ENCODE measurements at regions of chr11 and their contacts with region 1.

Region 1: DNA sequence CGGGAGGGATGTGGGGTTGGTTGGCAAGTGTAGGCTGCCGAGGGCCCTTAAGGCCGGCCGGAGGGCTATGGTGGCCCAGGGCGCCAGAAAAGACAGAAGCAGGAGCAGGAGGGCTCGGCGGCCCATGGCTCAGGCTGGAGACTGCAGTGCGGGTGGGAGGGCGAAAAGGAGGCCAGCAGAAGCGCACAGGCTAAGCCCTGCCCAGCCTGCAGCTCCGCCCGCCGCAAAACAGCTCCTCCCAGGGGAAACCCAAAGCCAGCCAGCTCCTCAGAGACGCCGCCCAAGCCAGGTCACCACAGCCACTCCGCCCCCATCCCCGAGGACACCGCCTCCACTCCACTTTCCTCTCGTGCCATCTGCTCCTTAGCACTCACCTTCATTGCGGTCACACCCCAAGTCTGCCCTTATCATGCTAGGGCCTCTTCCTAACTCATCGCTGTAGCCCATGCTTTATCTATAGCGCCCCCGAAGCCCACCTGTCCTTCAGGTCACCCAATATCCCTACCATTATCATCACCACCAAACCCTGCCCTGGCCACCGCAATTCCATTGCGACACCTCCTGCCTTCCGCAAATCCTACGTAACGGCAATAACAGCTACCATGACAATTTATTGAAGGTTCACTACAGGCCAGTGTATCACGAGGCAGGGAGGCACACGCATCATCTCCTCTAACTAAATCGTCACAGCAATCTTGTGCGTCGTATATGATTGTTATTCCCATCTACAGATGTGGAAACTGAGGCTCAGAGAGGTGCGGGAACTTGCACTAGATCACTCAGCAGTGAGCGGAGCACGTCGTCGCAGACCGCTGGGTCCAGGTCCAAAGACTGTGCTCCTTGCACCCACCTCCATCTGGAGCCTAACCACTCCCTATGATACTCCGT is at the start of gene PRCP:
- DNase-seq: peak; percentile 92 to 95
- H3K4me3 ChIP-seq: peak within 1 kb of the TSS; percentile 88
- H3K27ac ChIP-seq: peak within 1 kb of the TSS; percentile 31; the same call in 1 of the 2 replicates
- H3K4me1 ChIP-seq: peaks cover 17% of the 10 kb centered on the region
- H3K27me3 ChIP-seq: no peaks in the 10 kb centered on the region
- CTCF ChIP-seq: no peak
- total RNA-seq, gene PRCP: 42.7 and 46.2 TPM in 2 replicates

Region 2: DNA sequence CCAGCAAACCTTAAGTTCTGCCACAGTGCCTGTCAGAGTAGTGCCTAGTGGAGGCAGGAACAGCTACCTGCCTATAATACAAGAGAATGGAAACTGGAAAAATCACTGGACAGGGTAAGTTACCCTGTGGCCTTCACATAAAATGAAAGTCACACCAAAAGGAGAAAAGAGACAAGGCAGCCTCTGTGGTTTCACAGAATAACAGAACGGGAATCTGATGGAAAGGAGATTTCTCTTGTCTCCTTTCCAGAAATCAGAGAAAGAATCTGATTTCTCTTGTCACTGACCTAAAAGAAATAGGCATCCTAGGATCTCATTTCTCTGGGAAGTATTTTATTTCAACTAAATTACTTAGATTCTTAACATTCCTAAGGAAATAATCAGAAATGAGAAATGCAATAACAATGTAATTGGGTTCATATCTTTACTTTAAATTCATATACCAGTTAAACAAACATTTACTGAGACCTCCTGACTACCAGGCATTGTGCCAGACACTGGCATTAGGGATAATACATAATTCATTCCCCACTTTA is 41.9 kb before region 1 on chr11:
- CTCF ChIA-PET with region 1: no interaction called
- POLR2A ChIA-PET with region 1: interaction called, 5 read pairs
- intact Hi-C with region 1: loop called (anchors 2 kb)
- DNase-seq: peak; percentile 41 to 91
- H3K4me3 ChIP-seq: peak overlapping the region; percentile 3; the same call in 1 of the 2 replicates
- H3K27ac ChIP-seq: peak overlapping the region; percentile 76
- H3K4me1 ChIP-seq: peaks cover 35% of the 10 kb centered on the region
- H3K27me3 ChIP-seq: no peaks in the 10 kb centered on the region
- CTCF ChIP-seq: no peak

Region 3: DNA sequence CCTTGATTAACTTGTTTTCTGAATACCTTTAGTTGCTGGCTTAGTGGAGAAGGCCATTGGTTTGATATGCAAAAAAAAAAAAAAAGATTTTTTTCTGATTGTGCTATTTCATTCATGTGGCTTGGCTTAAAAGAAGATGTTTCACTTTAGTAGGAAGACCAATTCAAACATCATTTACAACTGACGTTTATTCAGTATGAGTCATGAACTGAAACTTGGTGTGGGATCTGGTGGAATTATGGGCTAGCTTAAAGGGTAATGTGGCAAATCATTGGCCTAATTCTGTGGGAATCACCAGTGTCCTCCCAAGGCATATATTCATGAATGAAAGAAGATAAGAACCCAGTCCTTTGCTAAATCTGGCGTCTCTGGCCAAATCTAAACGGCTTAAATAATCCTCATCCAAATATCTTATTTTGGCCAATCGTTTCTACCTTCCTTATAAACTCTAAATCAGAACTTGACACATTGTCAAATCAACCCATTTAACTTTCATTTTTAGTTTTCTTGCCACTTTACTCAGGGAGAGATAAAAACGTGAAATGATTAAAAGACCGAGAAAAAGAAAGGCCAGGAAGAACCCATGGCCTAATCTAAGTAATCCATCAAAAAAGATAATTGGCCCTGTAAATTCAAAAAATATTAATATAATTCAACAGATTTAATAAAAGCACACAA is 78.0 kb after region 1 on chr11:
- CTCF ChIA-PET with region 1: no interaction called
- POLR2A ChIA-PET with region 1: no interaction called
- intact Hi-C with region 1: no loop called
- DNase-seq: peak in 1 of 2 experiments; percentile 56
- H3K4me3 ChIP-seq: no peak overlapping the region
- H3K27ac ChIP-seq: no peak overlapping the region
- H3K4me1 ChIP-seq: no peaks in the 10 kb centered on the region
- H3K27me3 ChIP-seq: no peaks in the 10 kb centered on the region
- CTCF ChIP-seq: no peak

Region 4: GRCh38 chr11:83193315-83194280 is 293.1 kb after region 1 on chr11 and contains the start of gene ANKRD42:
- CTCF ChIA-PET with region 1: no interaction called
- POLR2A ChIA-PET with region 1: no interaction called
- intact Hi-C with region 1: loop called (anchors 2 kb)
- DNase-seq: peak; percentile 87 to 96
- H3K4me3 ChIP-seq: peak within 1 kb of the TSS; percentile 72
- H3K27ac ChIP-seq: peak within 1 kb of the TSS; percentile 42
- H3K4me1 ChIP-seq: peaks cover 32% of the 10 kb centered on the region
- H3K27me3 ChIP-seq: no peaks in the 10 kb centered on the region
- CTCF ChIP-seq: no peak
- total RNA-seq, gene ANKRD42: 6.8 and 10.4 TPM in 2 replicates

Region 5: DNA sequence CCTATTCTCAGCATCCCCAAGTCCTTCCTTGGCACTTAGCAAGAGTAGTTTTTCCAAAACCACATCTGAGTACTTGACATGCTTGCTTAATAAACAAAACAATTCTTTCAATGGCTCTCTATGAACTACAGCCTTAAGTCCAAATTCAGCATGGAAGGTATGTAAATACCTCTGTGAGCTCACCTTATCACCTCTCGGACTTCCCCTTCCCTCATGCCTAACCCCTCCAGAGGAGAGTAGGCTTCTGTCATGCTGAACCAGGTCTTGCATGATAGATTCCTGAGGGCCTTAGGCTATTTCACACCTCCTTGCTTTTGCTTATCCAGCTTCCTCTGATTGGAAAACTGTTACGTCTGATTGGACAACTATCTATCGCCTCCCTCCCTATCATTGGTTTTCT is 698.5 kb after region 1 on chr11:
- CTCF ChIA-PET with region 1: no interaction called
- POLR2A ChIA-PET with region 1: interaction called, 10 read pairs
- intact Hi-C with region 1: no loop called
- DNase-seq: no peak
- H3K4me3 ChIP-seq: no peak overlapping the region
- H3K27ac ChIP-seq: no peak overlapping the region
- H3K4me1 ChIP-seq: no peaks in the 10 kb centered on the region
- H3K27me3 ChIP-seq: no peaks in the 10 kb centered on the region
- CTCF ChIP-seq: no peak

Region 6: DNA sequence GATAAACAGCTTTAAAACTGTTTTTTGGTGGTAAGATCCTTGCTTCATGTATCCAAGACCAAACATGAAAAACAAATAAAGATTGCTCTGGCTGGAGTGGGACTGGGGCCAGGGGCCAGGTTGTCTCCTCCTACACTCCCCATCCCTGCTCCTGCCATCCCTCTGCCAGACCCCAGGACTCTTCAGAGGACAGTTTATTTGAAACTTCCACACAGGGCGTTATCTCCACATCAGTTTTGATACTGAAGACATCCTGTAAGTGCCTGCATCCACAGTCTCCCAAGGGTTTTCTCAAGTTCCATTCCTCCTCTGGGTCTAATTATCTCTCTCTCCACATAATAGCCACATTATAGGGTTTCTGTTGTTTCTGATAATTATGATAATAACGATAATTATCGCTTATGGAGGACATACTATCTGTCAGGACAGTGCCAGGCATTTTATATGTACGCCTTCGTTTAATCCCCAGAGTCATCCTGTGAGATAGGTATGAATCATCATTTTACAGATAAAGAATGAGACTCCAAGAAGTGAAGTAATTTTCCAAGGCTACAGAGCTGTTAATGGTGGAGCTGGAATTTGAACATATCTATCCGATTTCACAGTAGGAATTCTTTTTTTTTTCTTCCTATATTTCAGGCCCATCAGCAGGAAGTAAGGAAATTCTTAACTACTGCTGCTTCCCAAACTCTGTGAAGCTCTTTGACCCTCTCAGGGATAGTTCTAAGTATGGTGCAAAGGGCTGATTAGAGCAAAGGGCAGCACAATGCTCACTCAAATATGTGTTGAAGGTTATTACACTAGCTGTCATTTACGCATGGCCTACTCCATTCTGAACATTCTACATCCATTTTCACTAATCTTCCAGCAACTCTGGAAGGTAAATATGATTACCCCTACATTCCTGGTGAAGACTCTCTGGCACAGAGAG is 873.7 kb after region 1 on chr11:
- CTCF ChIA-PET with region 1: no interaction called
- POLR2A ChIA-PET with region 1: interaction called, 29 read pairs
- intact Hi-C with region 1: no loop called
- DNase-seq: no peak
- H3K4me3 ChIP-seq: no peak overlapping the region
- H3K27ac ChIP-seq: no peak overlapping the region
- H3K4me1 ChIP-seq: no peaks in the 10 kb centered on the region
- H3K27me3 ChIP-seq: peaks cover 6% of the 10 kb centered on the region; the same call in 1 of the 2 replicates
- CTCF ChIP-seq: no peak

Measured in PC-9 (cell line).